Panc1 (cell line): ENCODE measurements at regions of chr5 and their contacts with region 1.

Region 1: DNA sequence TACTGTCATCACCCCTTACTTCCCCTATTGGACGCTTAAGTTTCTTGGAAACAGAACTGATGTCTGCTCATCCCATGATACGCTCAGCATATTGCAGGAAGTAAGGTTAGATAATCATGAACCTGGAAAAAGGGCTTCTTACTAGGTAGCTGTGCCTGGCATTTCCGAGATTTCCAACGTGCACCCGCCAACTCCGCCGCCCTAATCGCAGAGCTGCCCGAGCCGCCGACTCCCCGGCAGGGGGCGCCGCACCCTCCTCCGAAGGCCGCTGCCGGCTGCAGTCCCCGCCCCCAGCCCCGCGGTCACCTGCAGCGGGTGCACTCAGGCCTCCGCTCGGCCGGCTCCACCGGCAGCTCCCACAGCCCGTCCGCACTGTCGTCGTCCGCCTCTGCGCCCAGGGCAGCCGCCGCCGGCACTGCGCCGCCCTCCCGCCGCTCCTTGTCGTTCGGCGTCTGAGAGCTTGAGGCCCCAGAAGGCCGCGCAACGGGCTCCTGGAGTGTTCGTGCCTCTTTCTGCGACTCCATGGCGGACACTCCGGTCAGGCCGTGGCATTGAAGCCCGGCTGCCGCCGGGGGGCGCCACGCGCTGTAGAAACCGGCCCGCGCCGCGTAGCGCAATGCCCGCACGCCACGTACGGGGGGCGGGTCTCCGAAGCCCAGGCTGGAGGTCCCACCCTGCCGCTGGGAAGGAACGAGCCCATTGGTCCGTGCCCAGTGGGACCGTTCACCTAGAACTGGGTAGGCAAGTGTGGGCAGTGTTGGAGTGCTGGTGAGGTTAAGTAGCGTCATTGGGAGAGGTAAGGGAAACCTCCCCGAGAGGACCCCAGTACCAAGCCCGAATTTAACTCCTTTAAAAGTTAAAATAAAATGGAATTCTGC is at the start of gene DTWD2:
- DNase-seq: peak; percentile 80
- ATAC-seq: peak; percentile 99
- H3K4me3 ChIP-seq: peak within 1 kb of the TSS; percentile 74 to 92
- H3K27ac ChIP-seq: peak within 1 kb of the TSS; percentile 90
- H3K4me1 ChIP-seq: peaks cover 4% of the 10 kb centered on the region; the same call in 1 of the 2 replicates
- H3K27me3 ChIP-seq: no peaks in the 10 kb centered on the region
- CTCF ChIP-seq: peak; percentile 98
- total RNA-seq, gene DTWD2: 10.0 TPM

Region 2: GRCh38 chr5:119220576-119221197 is 232.5 kb after region 1 on chr5:
- CTCF ChIA-PET with region 1: no interaction called
- POLR2A ChIA-PET with region 1: no interaction called
- in situ Hi-C with region 1: no loop called
- intact Hi-C with region 1: no loop called
- DNase-seq: no peak
- ATAC-seq: no peak
- H3K4me3 ChIP-seq: no peak overlapping the region
- H3K27ac ChIP-seq: no peak overlapping the region
- H3K4me1 ChIP-seq: no peaks in the 10 kb centered on the region
- H3K27me3 ChIP-seq: no peaks in the 10 kb centered on the region
- CTCF ChIP-seq: no peak

Region 3: DNA sequence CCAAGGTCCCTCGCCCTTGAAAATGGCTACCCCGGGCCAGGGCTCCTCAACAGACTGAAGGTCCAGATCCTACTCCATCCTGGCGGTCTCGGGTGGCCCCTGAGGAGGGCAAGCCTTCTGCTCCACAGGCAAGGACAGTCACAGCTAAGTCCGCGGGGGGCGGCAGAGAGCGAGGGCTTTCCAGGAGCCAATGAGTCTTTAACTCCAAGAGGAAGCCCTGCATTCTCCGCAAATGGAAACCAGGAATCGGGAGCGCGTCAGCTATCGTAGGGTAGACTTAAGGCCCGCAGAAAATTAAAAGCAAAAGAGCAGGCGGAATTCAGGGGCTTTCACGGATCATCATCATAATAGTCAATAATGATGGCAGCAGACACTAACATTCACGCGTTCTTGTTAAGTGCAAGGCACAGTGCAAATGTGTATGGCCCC is 279.7 kb after region 1 on chr5:
- CTCF ChIA-PET with region 1: interaction called, 3 read pairs
- POLR2A ChIA-PET with region 1: no interaction called
- in situ Hi-C with region 1: no loop called
- intact Hi-C with region 1: loop called (anchors 10 kb)
- DNase-seq: peak; percentile 84
- ATAC-seq: peak; percentile 85
- H3K4me3 ChIP-seq: peak overlapping the region; percentile 73 to 97
- H3K27ac ChIP-seq: peak overlapping the region; percentile 30
- H3K4me1 ChIP-seq: no peaks in the 10 kb centered on the region; the same call in 1 of the 2 replicates
- H3K27me3 ChIP-seq: no peaks in the 10 kb centered on the region
- CTCF ChIP-seq: peak; percentile 83

Region 4: GRCh38 chr5:119332978-119333401 is 344.8 kb after region 1 on chr5:
- CTCF ChIA-PET with region 1: interaction called, 7 read pairs
- POLR2A ChIA-PET with region 1: no interaction called
- in situ Hi-C with region 1: no loop called
- intact Hi-C with region 1: loop called (anchors 1 kb)
- DNase-seq: no peak
- ATAC-seq: no peak
- H3K4me3 ChIP-seq: no peak overlapping the region
- H3K27ac ChIP-seq: no peak overlapping the region
- H3K4me1 ChIP-seq: no peaks in the 10 kb centered on the region
- H3K27me3 ChIP-seq: no peaks in the 10 kb centered on the region
- CTCF ChIP-seq: no peak

Region 5: GRCh38 chr5:119411935-119412602 is 423.8 kb after region 1 on chr5:
- CTCF ChIA-PET with region 1: interaction called, 11 read pairs
- POLR2A ChIA-PET with region 1: no interaction called
- in situ Hi-C with region 1: no loop called
- intact Hi-C with region 1: loop called (anchors 1 kb)
- DNase-seq: peak; percentile 81
- ATAC-seq: peak; percentile 98
- H3K4me3 ChIP-seq: peak overlapping the region; percentile 52 to 53
- H3K27ac ChIP-seq: peak overlapping the region; percentile 62; the same call in 1 of the 2 replicates
- H3K4me1 ChIP-seq: peaks cover 5% of the 10 kb centered on the region; the same call in 1 of the 2 replicates
- H3K27me3 ChIP-seq: no peaks in the 10 kb centered on the region; the same call in 1 of the 2 replicates
- CTCF ChIP-seq: peak; percentile 88